H1 (cell line): ENCODE measurements at regions of chr22 and their contacts with region 1.

Region 1: DNA sequence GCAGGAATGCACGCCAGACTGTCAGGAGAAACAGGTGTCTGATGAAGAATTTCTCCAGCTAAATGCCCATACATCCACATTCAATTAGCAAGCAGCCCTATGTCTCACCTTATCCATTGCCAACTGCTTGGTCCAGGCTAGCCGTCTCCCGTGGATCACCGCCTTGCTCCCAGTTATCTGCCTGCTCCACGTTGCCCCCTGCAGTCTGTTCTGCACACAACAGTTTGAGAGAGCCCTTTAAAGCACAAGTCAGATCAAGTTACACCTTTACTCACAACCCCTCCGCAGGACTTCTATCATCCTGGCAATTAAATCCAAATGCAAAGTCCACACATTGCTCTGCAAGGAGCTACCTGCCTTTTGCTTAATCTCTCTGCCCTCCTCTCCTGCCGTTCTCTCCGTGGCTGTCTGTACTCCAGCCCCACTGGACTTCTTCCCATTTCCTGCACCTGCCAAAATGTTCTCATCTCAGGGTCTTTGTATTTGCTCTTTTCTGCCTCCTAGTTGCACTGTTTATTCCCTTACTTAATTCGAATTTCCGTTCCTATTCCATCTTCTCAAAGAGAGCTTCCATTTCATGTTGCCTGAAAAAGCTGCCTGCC is 185.3 kb upstream of the LARGE1 start:
- DNase-seq: peak; percentile 51 to 91
- H3K4me3 ChIP-seq: peak overlapping the region in 2 of 4 experiments; percentile 11 to 41; a peak in 1 of 8 replicates
- H3K27ac ChIP-seq: no peak overlapping the region
- H3K4me1 ChIP-seq: no peaks in the 10 kb centered on the region; a peak in 1 of 7 replicates
- H3K27me3 ChIP-seq: no peaks in the 10 kb centered on the region
- CTCF ChIP-seq: peak; percentile 78 to 92 (median 83)
- EP300 ChIP-seq: no peak
- POLR2A ChIP-seq: no peak
- RAD21 ChIP-seq: peak; percentile 63 to 77

Region 2: DNA sequence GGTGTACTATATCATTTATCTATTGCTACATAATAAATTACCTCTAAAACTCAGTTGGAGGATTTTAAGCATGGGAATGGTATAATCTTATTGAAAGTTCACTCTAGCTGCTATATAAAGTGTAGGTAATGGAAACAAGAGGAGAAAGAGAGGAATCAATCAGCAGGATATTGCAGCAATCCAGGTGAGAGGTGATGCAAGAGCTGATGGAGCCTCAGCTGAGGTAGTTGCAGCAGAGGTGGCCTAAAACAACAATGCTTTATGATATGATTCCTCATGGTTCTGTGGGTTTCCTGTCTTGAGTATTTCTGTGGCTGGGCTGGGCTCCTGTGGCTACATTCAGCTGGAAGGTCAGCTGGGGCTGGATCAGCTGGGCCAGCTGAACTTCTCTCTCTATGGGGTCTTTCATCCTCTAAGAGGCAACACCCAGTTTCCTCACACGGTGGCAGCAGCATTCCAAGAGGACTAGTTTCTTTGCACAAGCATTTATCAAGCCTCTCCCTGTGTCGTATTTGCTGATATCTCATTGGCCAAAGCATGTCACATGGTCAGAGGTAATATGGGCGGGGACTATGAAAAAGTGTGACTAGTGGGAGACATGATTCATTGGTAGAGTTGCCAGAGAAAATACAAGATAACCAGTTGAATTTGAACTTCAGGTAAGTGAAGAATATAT is 49.9 kb before region 1 on chr22:
- CTCF ChIA-PET with region 1: interaction called, 10 read pairs
- POLR2A ChIA-PET with region 1: interaction called, 4 read pairs
- DNase-seq: peak; percentile 38 to 87
- H3K4me3 ChIP-seq: no peak overlapping the region
- H3K27ac ChIP-seq: no peak overlapping the region
- H3K4me1 ChIP-seq: no peaks in the 10 kb centered on the region; a peak in 1 of 7 replicates
- H3K27me3 ChIP-seq: no peaks in the 10 kb centered on the region
- CTCF ChIP-seq: peak; percentile 21 to 83 (median 75)
- EP300 ChIP-seq: no peak
- POLR2A ChIP-seq: no peak
- RAD21 ChIP-seq: peak; percentile 91 to 95

Region 3: DNA sequence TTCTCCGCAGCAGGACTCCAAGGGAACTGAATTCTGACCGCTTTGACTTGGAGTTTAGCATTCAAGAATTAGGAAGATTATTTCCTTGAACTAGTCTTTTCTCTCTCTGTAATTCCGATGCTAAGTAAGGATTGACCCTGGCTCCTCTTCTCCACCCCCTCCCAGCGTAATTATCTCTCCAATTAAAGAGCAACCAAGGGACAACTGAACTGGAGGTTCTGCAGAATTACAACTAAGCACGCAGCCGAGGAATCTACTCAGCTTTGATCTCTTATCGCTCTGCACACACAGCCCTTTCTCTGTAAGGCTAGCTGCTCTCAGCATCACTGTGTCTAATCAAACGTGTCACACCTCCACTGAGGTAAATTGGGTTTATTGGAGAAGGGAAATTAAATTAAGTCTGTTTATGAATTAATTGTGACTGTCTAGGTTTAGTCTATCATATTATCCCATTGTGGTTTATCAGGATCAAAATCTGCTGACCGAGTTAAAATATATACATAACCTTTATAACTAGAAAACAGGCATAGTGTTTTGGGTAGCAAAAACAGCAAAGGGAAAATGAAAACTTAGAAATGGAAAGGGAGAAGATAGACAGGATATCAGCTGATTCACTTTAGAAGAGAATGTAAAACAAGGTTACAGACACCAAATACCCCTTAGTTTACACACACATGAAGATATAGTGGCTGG is 56.0 kb after region 1 on chr22:
- CTCF ChIA-PET with region 1: no interaction called
- POLR2A ChIA-PET with region 1: no interaction called
- DNase-seq: no peak
- H3K4me3 ChIP-seq: no peak overlapping the region
- H3K27ac ChIP-seq: no peak overlapping the region
- H3K4me1 ChIP-seq: peaks cover 0 to 8% (median 1%) of the 10 kb centered on the region in 4 experiments; a peak in 3 of 7 replicates
- H3K27me3 ChIP-seq: peaks cover 0 to 4% (median 0%) of the 10 kb centered on the region in 4 experiments; a peak in 2 of 7 replicates
- CTCF ChIP-seq: no peak
- EP300 ChIP-seq: no peak
- POLR2A ChIP-seq: no peak
- RAD21 ChIP-seq: no peak

Region 4: DNA sequence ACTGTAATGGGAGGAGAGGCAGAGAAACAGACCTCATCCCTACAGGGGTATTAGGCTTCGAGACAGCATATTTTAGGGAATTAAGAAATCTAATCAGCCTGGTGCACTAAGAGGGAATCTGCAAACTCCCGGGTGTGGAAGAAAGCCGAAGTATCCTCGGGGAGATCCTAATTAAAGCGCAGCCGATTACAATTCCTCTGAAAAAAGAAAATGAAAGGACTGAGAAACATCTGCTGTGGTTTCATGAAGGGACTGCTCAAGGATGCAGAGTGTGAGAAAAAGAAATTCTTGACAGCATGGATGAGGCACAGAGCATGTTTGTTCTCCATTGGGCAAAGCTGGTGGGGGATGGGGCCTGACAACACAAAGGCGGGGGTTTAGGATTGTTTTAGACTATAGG is 104.7 kb after region 1 on chr22:
- CTCF ChIA-PET with region 1: no interaction called
- POLR2A ChIA-PET with region 1: no interaction called
- DNase-seq: no peak
- H3K4me3 ChIP-seq: no peak overlapping the region
- H3K27ac ChIP-seq: no peak overlapping the region
- H3K4me1 ChIP-seq: no peaks in the 10 kb centered on the region
- H3K27me3 ChIP-seq: no peaks in the 10 kb centered on the region; a peak in 1 of 7 replicates
- CTCF ChIP-seq: no peak
- EP300 ChIP-seq: no peak
- POLR2A ChIP-seq: no peak
- RAD21 ChIP-seq: no peak